Naive thymus-derived CD4-positive, alpha-beta T cell (primary cell): ENCODE measurements at regions of chr16 and their contacts with region 1.

Region 1: GRCh38 chr16:88811769-88812512 is at the start of gene APRT:
- DNase-seq: peak; percentile 92 to 100 (median 98)
- ATAC-seq: peak; percentile 95
- H3K4me3 ChIP-seq: peak within 1 kb of the TSS; percentile 97
- H3K4me3 Mint-ChIP-seq: peak within 1 kb of the TSS; percentile 92 to 99 (median 96)
- H3K27ac ChIP-seq: peak within 1 kb of the TSS; percentile 84
- H3K27ac Mint-ChIP-seq: peak within 1 kb of the TSS; percentile 79 to 98 (median 95)
- H3K4me1 ChIP-seq: peaks cover 8 to 11% of the 10 kb centered on the region in 2 donors
- H3K4me1 Mint-ChIP-seq: peaks cover 0 to 26% (median 12%) of the 10 kb centered on the region in 7 donors
- H3K27me3 ChIP-seq: no peaks in the 10 kb centered on the region
- H3K27me3 Mint-ChIP-seq: no peaks in the 10 kb centered on the region
- total RNA-seq, gene APRT: 134 to 178 (median 161) TPM

Region 2: DNA sequence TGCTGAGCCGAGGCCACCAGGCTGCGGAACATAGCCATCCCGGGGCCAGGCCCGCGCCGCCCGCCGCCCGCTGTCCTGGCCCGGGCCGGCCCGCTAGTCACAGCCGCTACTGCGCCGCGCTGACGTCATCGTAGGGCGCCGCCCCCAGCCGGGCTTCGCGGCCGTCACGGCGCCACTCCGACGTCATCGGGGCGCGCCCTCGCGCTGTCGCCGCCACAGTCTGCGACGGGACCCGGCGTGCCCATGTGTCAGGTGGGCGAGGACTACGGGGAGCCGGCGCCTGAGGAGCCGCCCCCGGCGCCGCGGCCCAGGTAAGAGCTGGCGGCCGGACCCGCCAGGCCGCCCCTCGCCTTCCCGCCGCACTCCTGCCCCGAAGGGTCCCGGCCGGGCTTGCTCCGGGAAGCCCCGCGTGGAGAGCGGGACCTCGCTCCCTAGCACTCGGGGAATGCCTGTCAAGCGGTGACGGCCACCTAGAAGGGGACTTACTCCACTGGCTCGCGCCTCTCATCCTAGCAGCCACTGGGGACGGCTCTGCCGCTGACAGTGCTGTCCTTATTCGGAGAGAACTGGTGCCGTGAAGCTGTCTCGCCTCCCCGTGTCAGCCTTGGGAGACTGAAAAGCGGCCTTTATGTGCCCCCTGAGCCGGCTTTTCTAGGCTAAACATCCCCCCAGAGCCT is 105.5 kb before region 1 on chr16 and contains the starts of genes CTU2 and RNF166:
- CTCF ChIA-PET with region 1: no interaction called
- POLR2A ChIA-PET with region 1: interaction called, 17 read pairs
- intact Hi-C with region 1: no loop called
- DNase-seq: peak; percentile 86 to 98 (median 92)
- ATAC-seq: peak; percentile 84
- H3K4me3 ChIP-seq: peak within 1 kb of the TSS; percentile 79
- H3K4me3 Mint-ChIP-seq: peak within 1 kb of the TSS; percentile 78 to 98 (median 94)
- H3K27ac ChIP-seq: peak within 1 kb of the TSS; percentile 88
- H3K27ac Mint-ChIP-seq: peak within 1 kb of the TSS; percentile 85 to 98 (median 97)
- H3K4me1 ChIP-seq: peaks cover 25 to 40% of the 10 kb centered on the region in 2 donors
- H3K4me1 Mint-ChIP-seq: peaks cover 31 to 45% (median 41%) of the 10 kb centered on the region in 7 donors
- H3K27me3 ChIP-seq: no peaks in the 10 kb centered on the region
- H3K27me3 Mint-ChIP-seq: no peaks in the 10 kb centered on the region
- total RNA-seq, gene CTU2: 26.0 to 43.3 (median 28.3) TPM
- total RNA-seq, gene RNF166: 99.8 to 324 (median 133) TPM

Region 3: GRCh38 chr16:88737298-88738150 is 74.4 kb before region 1 on chr16:
- CTCF ChIA-PET with region 1: no interaction called
- POLR2A ChIA-PET with region 1: interaction called, 5 read pairs
- intact Hi-C with region 1: loop called in 1 of 2 experiments (anchors 2 kb)
- DNase-seq: peak; percentile 55 to 81 (median 65)
- ATAC-seq: peak; percentile 95
- H3K4me3 ChIP-seq: no peak overlapping the region
- H3K4me3 Mint-ChIP-seq: peak overlapping the region in 1 of 10 donors; percentile 34
- H3K27ac ChIP-seq: no peak overlapping the region
- H3K27ac Mint-ChIP-seq: no peak overlapping the region
- H3K4me1 ChIP-seq: peaks cover 3 to 5% of the 10 kb centered on the region in 2 donors
- H3K4me1 Mint-ChIP-seq: peaks cover 0 to 8% (median 0%) of the 10 kb centered on the region in 7 donors
- H3K27me3 ChIP-seq: no peaks in the 10 kb centered on the region
- H3K27me3 Mint-ChIP-seq: no peaks in the 10 kb centered on the region

Region 4: GRCh38 chr16:88743693-88744576 is 68.0 kb before region 1 on chr16:
- CTCF ChIA-PET with region 1: no interaction called
- POLR2A ChIA-PET with region 1: interaction called, 15 read pairs
- intact Hi-C with region 1: no loop called
- DNase-seq: peak; percentile 55 to 81 (median 69)
- ATAC-seq: peak; percentile 71
- H3K4me3 ChIP-seq: no peak overlapping the region
- H3K4me3 Mint-ChIP-seq: peak overlapping the region in 3 of 10 donors; percentile 16 to 69 (median 44)
- H3K27ac ChIP-seq: no peak overlapping the region
- H3K27ac Mint-ChIP-seq: peak overlapping the region in 1 of 9 donors; percentile 29
- H3K4me1 ChIP-seq: peaks cover 22 to 31% of the 10 kb centered on the region in 2 donors
- H3K4me1 Mint-ChIP-seq: peaks cover 9 to 27% (median 17%) of the 10 kb centered on the region in 7 donors
- H3K27me3 ChIP-seq: no peaks in the 10 kb centered on the region
- H3K27me3 Mint-ChIP-seq: no peaks in the 10 kb centered on the region

Region 5: GRCh38 chr16:88790312-88791211 is 21.4 kb before region 1 on chr16:
- CTCF ChIA-PET with region 1: interaction called, 3 read pairs
- POLR2A ChIA-PET with region 1: interaction called, 71 read pairs
- intact Hi-C with region 1: loop called in 1 of 2 experiments (anchors 1 kb)
- DNase-seq: peak in 7 of 9 donors; percentile 46 to 60 (median 49)
- ATAC-seq: peak; percentile 78
- H3K4me3 ChIP-seq: peak overlapping the region; percentile 48
- H3K4me3 Mint-ChIP-seq: peak overlapping the region; percentile 48 to 80 (median 72)
- H3K27ac ChIP-seq: peak overlapping the region; percentile 60
- H3K27ac Mint-ChIP-seq: peak overlapping the region; percentile 10 to 95 (median 87)
- H3K4me1 ChIP-seq: peaks cover 34 to 58% of the 10 kb centered on the region in 2 donors
- H3K4me1 Mint-ChIP-seq: peaks cover 19 to 59% (median 49%) of the 10 kb centered on the region in 7 donors
- H3K27me3 ChIP-seq: no peaks in the 10 kb centered on the region
- H3K27me3 Mint-ChIP-seq: no peaks in the 10 kb centered on the region

Region 6: GRCh38 chr16:88901718-88902337 is 89.9 kb after region 1 on chr16:
- CTCF ChIA-PET with region 1: no interaction called
- POLR2A ChIA-PET with region 1: no interaction called
- intact Hi-C with region 1: no loop called
- DNase-seq: no peak
- ATAC-seq: no peak
- H3K4me3 ChIP-seq: no peak overlapping the region
- H3K4me3 Mint-ChIP-seq: no peak overlapping the region
- H3K27ac ChIP-seq: no peak overlapping the region
- H3K27ac Mint-ChIP-seq: no peak overlapping the region
- H3K4me1 ChIP-seq: no peaks in the 10 kb centered on the region
- H3K4me1 Mint-ChIP-seq: peaks cover 0 to 4% (median 0%) of the 10 kb centered on the region in 7 donors
- H3K27me3 ChIP-seq: no peaks in the 10 kb centered on the region
- H3K27me3 Mint-ChIP-seq: no peaks in the 10 kb centered on the region